ENCODE measurements at regions of chr1 and their contacts with region 1.

Region 1: GRCh38 chr1:232630047-232630893 is at the start of gene SIPA1L2:
- DNase-seq: peak; percentile 82 to 98 (median 93)
- H3K4me3 ChIP-seq: peak within 1 kb of the TSS; percentile 53 to 92 (median 85)
- H3K27ac ChIP-seq: peak within 1 kb of the TSS; percentile 46 to 99 (median 94)
- H3K27me3 ChIP-seq: no peaks in the 10 kb centered on the region
- CTCF ChIP-seq: peak in 53 of 56 donors; percentile 31 to 77 (median 53)
- total RNA-seq, gene SIPA1L2: 24.3 to 66.4 (median 47.9) TPM

Region 2: GRCh38 chr1:231866392-231867331 is 763.6 kb before region 1 on chr1:
- intact Hi-C with region 1: loop called (anchors 2 to 5 kb)
- DNase-seq: peak in 6 of 10 donors; percentile 43 to 63 (median 60)
- H3K4me3 ChIP-seq: no peak overlapping the region
- H3K27ac ChIP-seq: no peak overlapping the region
- H3K27me3 ChIP-seq: no peaks in the 10 kb centered on the region
- CTCF ChIP-seq: peak; percentile 79 to 96 (median 88)

Region 3: GRCh38 chr1:232805269-232806185 is 175.3 kb after region 1 on chr1 and contains the start of gene MAP10:
- intact Hi-C with region 1: loop called (anchors 2 to 10 kb)
- DNase-seq: peak; percentile 42 to 79 (median 70)
- H3K4me3 ChIP-seq: peak within 1 kb of the TSS; percentile 48 to 92 (median 79)
- H3K27ac ChIP-seq: peak within 1 kb of the TSS; percentile 27 to 97 (median 92)
- H3K27me3 ChIP-seq: no peaks in the 10 kb centered on the region
- CTCF ChIP-seq: peak in 6 of 56 donors; percentile 8 to 29 (median 19)
- total RNA-seq, gene MAP10: 1.3 to 7.8 (median 4.4) TPM

Region 4: GRCh38 chr1:232950197-232951176 is 320.2 kb after region 1 on chr1 and contains the start of gene NTPCR:
- intact Hi-C with region 1: loop called (anchors 2 to 5 kb)
- DNase-seq: peak; percentile 79 to 95 (median 88)
- H3K4me3 ChIP-seq: peak within 1 kb of the TSS; percentile 71 to 100 (median 94)
- H3K27ac ChIP-seq: peak within 1 kb of the TSS in 56 of 59 donors; percentile 29 to 94 (median 86)
- H3K27me3 ChIP-seq: no peaks in the 10 kb centered on the region
- CTCF ChIP-seq: peak in 49 of 56 donors; percentile 4 to 66 (median 41)
- total RNA-seq, gene NTPCR: 39.5 to 83.5 (median 61.4) TPM

Region 5: DNA sequence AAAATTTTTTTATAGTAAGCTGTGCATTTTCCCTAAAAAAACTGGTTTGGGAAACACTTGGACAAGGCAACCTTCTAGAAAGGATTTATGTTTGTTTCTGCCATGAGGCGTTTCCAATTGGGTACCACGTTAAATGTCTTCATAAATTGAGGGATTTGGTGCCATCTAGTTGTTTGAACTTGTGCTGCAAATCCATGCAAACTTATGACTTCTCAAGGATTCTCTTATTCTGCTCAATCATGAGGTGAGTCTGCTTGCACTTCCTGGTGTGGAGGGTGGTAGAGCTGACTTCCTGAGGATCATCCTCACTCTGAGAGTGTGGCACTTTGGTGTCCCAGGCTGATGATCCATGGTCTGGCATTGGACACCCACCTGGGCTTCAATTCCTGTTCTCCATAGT is 542.0 kb after region 1 on chr1:
- intact Hi-C with region 1: loop called in 1 of 2 experiments (anchors 5 kb)
- DNase-seq: no peak
- H3K4me3 ChIP-seq: no peak overlapping the region
- H3K27ac ChIP-seq: no peak overlapping the region
- H3K27me3 ChIP-seq: no peaks in the 10 kb centered on the region
- CTCF ChIP-seq: peak in 32 of 56 donors; percentile 12 to 62 (median 38)

Measured in dorsolateral prefrontal cortex (tissue), 120 donors.